ENCODE measurements at regions of chr13 and their contacts with region 1.

Region 1: GRCh38 chr13:24220086-24220703 is 59.7 kb downstream of the SPATA13 start:
- DNase-seq: peak; percentile 54 to 59
- H3K4me3 ChIP-seq: no peak overlapping the region
- H3K27ac ChIP-seq: peak overlapping the region in 1 of 3 donors; percentile 97
- H3K4me1 ChIP-seq: peaks cover 31 to 43% of the 10 kb centered on the region in 2 donors
- H3K27me3 ChIP-seq: no peaks in the 10 kb centered on the region
- CTCF ChIP-seq: peak; percentile 25 to 94 (median 78)
- POLR2A ChIP-seq: no peak

Region 2: GRCh38 chr13:23921451-23921888 is 298.7 kb before region 1 on chr13:
- intact Hi-C with region 1: loop called (anchors 5 kb)
- DNase-seq: no peak
- H3K4me3 ChIP-seq: no peak overlapping the region
- H3K27ac ChIP-seq: no peak overlapping the region
- H3K4me1 ChIP-seq: peaks cover 5 to 7% of the 10 kb centered on the region in 2 donors
- H3K27me3 ChIP-seq: no peaks in the 10 kb centered on the region
- CTCF ChIP-seq: peak; percentile 45 to 76 (median 62)
- POLR2A ChIP-seq: no peak

Region 3: GRCh38 chr13:24020375-24020830 is 199.8 kb before region 1 on chr13:
- intact Hi-C with region 1: loop called (anchors 5 kb)
- DNase-seq: peak; percentile 58 to 65
- H3K4me3 ChIP-seq: no peak overlapping the region
- H3K27ac ChIP-seq: no peak overlapping the region
- H3K4me1 ChIP-seq: no peaks in the 10 kb centered on the region
- H3K27me3 ChIP-seq: no peaks in the 10 kb centered on the region
- CTCF ChIP-seq: peak; percentile 39 to 84 (median 80)
- POLR2A ChIP-seq: no peak

Region 4: DNA sequence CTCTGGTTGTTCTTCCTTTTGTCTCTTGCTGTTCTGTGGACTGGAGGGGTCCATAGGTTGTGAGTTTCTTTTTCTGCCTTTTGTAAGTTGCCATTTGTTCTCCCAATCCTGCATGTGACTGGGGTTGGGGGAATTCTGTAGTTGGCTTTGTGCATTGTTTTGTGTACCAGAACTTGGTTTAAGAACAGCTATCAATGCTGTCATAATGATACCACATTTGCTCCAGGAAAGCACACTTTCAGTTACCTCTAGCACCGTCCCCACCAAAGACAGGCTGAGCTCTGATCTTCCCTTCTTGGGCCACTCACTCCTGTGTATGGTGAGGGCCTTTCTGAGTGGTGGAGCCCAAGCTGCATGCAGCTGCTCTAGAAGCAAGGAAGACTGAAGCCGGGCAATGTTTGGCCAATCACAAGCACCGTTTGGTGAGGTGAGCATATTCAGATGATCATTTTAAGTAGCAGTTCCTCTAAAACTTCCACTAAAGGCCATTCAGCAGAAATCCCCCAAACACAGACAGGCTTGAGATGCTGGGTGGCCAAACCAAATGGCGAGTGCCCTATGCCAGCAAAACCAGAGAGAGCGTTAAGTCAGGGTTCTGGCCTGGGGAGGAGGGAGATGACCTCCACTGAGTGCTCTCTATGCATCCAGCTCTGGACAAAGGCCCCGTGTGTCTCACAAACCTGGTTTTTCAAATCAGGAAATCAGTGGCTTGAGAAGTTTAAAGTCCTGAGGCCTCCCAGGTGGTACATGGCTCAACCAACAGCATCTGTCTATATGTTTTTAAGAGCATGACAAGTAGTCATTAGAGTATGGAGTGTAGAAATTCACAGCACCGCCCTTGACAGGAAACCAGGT is 180.3 kb before region 1 on chr13:
- intact Hi-C with region 1: loop called (anchors 5 kb)
- DNase-seq: no peak
- H3K4me3 ChIP-seq: no peak overlapping the region
- H3K27ac ChIP-seq: no peak overlapping the region
- H3K4me1 ChIP-seq: peaks cover 0 to 6% of the 10 kb centered on the region in 2 donors
- H3K27me3 ChIP-seq: no peaks in the 10 kb centered on the region
- CTCF ChIP-seq: no peak
- POLR2A ChIP-seq: no peak

Measured in thyroid gland (tissue), 4 donors.